GM18951 (cell line): ENCODE measurements at regions of chr16 and their contacts with region 1.

Region 1: GRCh38 chr16:88452482-88453216 is 431 bp upstream of the ZFPM1 start:
- POLR2A ChIP-seq: peak; percentile 18

Region 2: GRCh38 chr16:88303890-88304819 is 148.5 kb before region 1 on chr16:
- in situ Hi-C with region 1: no loop called
- POLR2A ChIP-seq: no peak

Region 3: GRCh38 chr16:88527186-88527936 is 74.7 kb after region 1 on chr16:
- in situ Hi-C with region 1: loop called (anchors 10 kb)
- POLR2A ChIP-seq: no peak